H1 (cell line): ENCODE measurements at regions of chr15 and their contacts with region 1.

Region 1: DNA sequence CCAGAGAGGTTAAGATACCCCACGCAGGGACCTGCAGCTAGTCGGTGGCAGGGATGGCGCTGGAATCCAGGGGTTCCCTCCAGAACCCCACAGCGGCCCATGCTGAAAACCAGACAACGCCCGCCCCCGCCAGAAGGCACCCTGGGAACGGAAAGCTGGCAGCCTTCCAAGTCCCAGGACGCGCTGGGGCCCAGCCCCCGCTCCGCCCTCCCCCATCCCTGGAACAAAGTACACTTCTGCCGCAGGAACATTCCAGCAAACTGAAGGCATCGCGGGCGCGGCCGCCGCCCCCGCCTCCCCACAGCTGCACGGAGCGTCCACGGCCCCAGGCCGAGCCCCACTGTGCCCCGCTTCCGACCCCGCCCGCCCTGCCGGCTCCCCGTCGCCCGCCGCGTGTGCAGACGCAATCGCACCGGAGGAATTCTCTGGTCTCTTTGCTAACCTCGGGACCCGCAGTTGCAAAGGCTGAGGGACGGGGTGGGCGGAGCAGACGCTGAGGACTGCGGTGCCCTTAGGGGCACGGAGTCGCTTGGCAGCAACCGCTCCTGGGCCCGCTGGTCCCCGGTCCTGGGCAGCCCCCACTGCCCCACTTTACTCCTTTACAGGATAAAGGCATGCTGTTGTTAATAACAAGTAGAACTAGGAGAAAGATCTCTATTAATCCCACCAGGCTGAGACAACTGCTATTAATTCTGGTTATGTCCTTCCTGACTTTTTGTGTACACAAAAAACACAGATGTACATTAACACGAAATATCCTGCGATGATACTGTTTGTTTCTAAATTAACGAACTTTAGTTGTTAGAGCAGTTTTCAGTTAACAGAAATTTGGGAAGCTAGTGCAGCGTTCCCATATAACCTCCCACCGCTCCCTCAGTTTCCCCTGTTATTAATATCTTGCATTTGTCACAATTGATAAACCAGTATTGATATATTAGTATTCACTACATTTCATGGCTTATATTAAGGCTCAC is 45.0 kb upstream of the RNU6-1 start:
- DNase-seq: peak; percentile 33 to 81
- H3K4me3 ChIP-seq: peak overlapping the region; percentile 41 to 62 (median 46)
- H3K27ac ChIP-seq: no peak overlapping the region
- H3K4me1 ChIP-seq: peaks cover 3 to 8% (median 6%) of the 10 kb centered on the region in 4 experiments; a peak in 6 of 7 replicates
- H3K27me3 ChIP-seq: peaks cover 0 to 8% (median 2%) of the 10 kb centered on the region in 4 experiments; a peak in 2 of 7 replicates
- CTCF ChIP-seq: no peak
- EP300 ChIP-seq: no peak
- POLR2A ChIP-seq: no peak; a peak in 1 of 3 replicates
- RAD21 ChIP-seq: no peak; a peak in 1 of 4 replicates

Region 2: GRCh38 chr15:67863442-67863987 is 21.3 kb before region 1 on chr15:
- CTCF ChIA-PET with region 1: interaction called, 8 read pairs
- POLR2A ChIA-PET with region 1: interaction called, 10 read pairs
- DNase-seq: peak in 1 of 2 experiments; percentile 86
- H3K4me3 ChIP-seq: peak overlapping the region; percentile 12 to 54 (median 46); a peak in 5 of 8 replicates
- H3K27ac ChIP-seq: no peak overlapping the region
- H3K4me1 ChIP-seq: peaks cover 0 to 15% (median 5%) of the 10 kb centered on the region in 4 experiments; a peak in 5 of 7 replicates
- H3K27me3 ChIP-seq: peaks cover 0 to 4% (median 1%) of the 10 kb centered on the region in 4 experiments; a peak in 3 of 7 replicates
- CTCF ChIP-seq: peak; percentile 83 to 91 (median 84)
- EP300 ChIP-seq: no peak
- POLR2A ChIP-seq: no peak
- RAD21 ChIP-seq: peak; percentile 95 to 97

Region 3: DNA sequence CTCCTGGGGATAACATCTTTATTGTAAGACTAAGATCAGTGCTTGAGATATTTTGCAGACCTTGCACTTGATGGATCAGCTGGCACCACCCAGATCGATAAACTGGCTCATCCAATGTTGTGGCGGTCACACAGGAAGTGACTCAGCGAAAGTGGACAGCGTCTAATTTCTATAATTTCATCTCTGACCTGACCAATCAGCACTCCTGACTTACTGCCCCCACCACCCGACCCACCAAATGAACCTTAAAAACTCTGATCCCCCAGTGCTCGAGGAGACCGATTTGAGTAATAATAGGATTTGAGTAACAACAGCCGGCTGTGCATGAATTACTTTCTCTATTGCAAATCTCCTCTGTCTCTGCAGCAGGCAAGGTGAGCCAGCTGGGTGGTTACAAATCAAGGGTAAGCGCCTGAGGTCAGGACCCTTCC is 17.8 kb after region 1 on chr15:
- CTCF ChIA-PET with region 1: interaction called, 12 read pairs
- POLR2A ChIA-PET with region 1: no interaction called
- DNase-seq: no peak
- H3K4me3 ChIP-seq: no peak overlapping the region
- H3K27ac ChIP-seq: no peak overlapping the region
- H3K4me1 ChIP-seq: peaks cover 0 to 4% (median 0%) of the 10 kb centered on the region in 4 experiments; a peak in 1 of 7 replicates
- H3K27me3 ChIP-seq: no peaks in the 10 kb centered on the region
- CTCF ChIP-seq: no peak
- EP300 ChIP-seq: no peak
- POLR2A ChIP-seq: no peak
- RAD21 ChIP-seq: no peak

Region 4: GRCh38 chr15:67927501-67928168 is 42.8 kb after region 1 on chr15:
- CTCF ChIA-PET with region 1: no interaction called
- POLR2A ChIA-PET with region 1: no interaction called
- DNase-seq: no peak
- H3K4me3 ChIP-seq: no peak overlapping the region
- H3K27ac ChIP-seq: no peak overlapping the region
- H3K4me1 ChIP-seq: 0 out of 7 replicates have a peak, but pooled peaks cover 0 to 2% (median 0%) of the 10 kb centered on the region in 4 experiments
- H3K27me3 ChIP-seq: no peaks in the 10 kb centered on the region
- CTCF ChIP-seq: no peak
- EP300 ChIP-seq: no peak
- POLR2A ChIP-seq: no peak
- RAD21 ChIP-seq: no peak